ENCODE measurements at regions of chr4 and their contacts with region 1.

Region 1: DNA sequence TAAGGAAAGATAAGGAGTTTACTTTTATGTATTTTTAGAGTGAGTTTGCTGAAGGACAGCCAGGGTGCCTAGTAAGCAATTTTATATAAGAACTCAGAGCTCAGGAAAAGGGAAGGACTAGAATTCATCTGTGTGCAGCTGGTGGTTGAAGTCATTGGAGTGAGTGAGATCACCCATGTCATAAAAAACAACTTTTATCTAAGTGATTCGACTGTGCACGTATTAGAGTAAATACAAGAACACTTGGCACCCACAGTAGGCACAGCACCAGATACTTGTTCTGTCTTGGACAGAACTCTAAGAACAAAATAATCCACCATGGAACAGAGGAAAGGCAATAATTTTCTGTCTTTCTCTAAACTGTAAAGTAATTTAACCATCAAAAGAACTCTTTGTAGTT is 31.6 kb downstream of the SYNPO2 start:
- DNase-seq: peak in 4 of 5 donors; percentile 39 to 74 (median 54)
- ATAC-seq: peak; percentile 90 to 94 (median 91)
- H3K4me3 ChIP-seq: no peak overlapping the region
- H3K27ac ChIP-seq: peak overlapping the region; percentile 63 to 94 (median 76)
- H3K4me1 ChIP-seq: peaks cover 0 to 81% (median 59%) of the 10 kb centered on the region in 12 donors
- H3K27me3 ChIP-seq: no peaks in the 10 kb centered on the region
- CTCF ChIP-seq: no peak
- POLR2A ChIP-seq: no peak

Region 2: DNA sequence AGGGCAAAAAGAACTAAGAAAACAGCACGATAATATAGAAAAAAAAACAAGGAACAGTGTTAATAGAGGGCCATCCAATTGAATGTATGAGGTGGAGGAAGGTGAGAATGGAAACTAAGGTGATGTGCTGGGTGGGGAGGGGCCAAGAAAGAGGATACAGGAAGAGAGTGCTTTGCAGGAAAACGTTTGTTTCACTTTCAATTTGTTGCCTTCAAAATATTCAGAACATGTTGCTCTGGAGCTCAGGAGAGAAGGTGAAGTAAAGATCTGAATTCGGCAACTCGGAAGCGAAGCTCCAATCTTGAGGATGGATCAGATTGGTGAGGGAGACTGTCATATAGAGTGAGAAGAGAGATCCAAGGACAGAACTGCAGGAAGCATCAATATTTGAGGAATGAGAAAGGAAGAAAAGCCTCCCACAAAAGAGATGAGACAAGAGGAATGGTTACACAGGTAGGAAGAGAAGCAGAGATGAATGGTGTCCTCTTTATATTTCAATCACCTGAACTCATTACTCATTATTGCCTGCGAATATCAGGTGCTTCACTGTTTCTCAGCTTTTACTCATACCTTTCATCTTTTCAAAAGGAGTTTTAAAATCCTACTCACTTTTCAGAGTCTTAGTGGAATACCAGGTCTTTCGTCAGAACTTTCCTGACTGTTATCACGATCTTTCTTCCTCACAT is 69.6 kb before region 1 on chr4:
- intact Hi-C with region 1: no loop called
- DNase-seq: no peak
- ATAC-seq: peak in 3 of 4 donors; percentile 39 to 63 (median 42)
- H3K4me3 ChIP-seq: peak overlapping the region in 11 of 12 donors; percentile 5 to 61 (median 47)
- H3K27ac ChIP-seq: peak overlapping the region in 5 of 12 donors; percentile 1 to 51 (median 50)
- H3K4me1 ChIP-seq: peaks cover 0 to 13% (median 4%) of the 10 kb centered on the region in 12 donors
- H3K27me3 ChIP-seq: no peaks in the 10 kb centered on the region
- CTCF ChIP-seq: no peak
- POLR2A ChIP-seq: no peak

Region 3: DNA sequence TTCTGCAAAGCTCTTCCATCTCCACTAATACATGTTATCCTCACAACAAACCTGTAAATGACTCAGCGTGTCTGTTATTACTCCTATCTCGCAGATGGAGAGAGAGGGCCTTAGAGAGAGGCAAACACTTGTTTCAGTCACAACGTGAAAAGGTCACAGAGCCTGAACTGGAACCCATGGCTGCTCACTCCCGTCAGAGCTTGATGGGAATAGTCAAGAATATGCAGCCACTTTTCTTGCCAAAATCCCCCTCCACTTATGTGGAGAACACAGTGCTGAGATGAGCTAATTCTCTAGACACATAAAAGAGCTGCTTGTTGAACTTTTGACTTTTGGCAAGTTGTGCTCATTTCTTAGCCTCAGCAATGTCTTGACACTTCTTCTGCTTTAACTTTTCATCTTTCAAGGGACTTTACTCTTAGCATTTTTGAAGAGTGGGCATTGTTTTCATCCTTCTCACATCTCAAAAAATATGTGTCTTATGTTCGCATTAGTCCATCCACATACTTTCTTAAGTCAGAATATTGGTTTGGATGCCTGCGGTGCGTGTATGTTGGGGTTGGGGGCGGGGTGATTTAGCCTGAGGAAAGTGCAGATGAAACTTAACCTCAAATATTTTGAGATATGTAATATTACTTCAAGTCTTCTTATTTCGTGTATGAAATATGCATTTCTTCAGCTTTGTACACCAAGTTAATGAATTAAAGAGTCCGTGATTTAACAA is 37.6 kb after region 1 on chr4:
- intact Hi-C with region 1: loop called in 1 of 10 experiments (anchors 5 kb)
- DNase-seq: peak in 1 of 5 donors; percentile 76
- ATAC-seq: peak; percentile 58 to 94 (median 76)
- H3K4me3 ChIP-seq: no peak overlapping the region
- H3K27ac ChIP-seq: peak overlapping the region in 11 of 12 donors; percentile 5 to 84 (median 55)
- H3K4me1 ChIP-seq: peaks cover 0 to 74% (median 45%) of the 10 kb centered on the region in 12 donors
- H3K27me3 ChIP-seq: no peaks in the 10 kb centered on the region
- CTCF ChIP-seq: no peak
- POLR2A ChIP-seq: no peak